Activated naive CD4-positive, alpha-beta T cell treated with anti-CD3 and anti-CD28 coated beads for 36 hours (primary cell): ENCODE measurements at regions of chr22 and their contacts with region 1.

Region 1: GRCh38 chr22:37623075-37624016 is 14.7 kb downstream of the GGA1 start:
- DNase-seq: peak; percentile 86
- H3K4me3 Mint-ChIP-seq: no peak overlapping the region
- H3K27ac Mint-ChIP-seq: peak overlapping the region; percentile 84
- H3K4me1 Mint-ChIP-seq: peaks cover 40% of the 10 kb centered on the region
- H3K27me3 Mint-ChIP-seq: no peaks in the 10 kb centered on the region

Region 2: DNA sequence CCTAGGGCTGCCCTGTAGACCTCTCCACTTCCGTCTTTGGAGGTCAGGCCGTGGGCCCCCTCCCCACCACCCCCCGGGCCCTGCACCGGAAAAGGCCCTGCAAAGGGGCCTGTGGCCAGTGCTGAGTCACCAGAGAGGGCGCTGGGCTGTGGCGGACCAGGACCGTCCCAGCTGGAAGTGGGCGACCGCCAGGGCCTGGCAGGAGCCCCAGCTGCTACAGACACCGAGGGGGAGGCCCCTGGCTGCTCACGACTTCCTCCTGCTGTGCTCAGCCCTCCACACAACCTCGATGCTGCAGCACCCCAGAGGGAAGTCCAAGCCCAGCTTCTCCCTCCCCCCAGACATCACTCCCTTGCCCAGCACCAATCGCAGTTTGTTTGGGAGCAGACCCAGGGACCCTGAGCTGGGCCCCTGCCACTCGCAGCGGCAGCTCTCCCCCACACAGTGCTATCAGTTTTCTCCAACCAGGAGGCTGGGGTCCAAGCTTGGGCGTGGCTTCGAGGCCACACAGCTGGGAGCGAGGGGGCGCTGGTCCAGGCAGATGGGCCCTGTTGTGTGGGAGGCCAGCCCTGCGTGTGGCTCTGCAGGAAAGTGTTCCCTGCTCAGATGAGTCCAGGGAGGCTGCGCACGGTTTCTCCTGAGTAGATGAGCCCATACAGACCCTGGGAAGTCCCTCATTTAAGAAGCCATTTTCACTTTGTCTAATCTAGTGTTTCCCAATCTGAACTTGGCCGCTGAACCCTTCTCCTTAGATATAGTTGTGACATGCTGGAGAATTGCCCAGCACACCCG is 10.5 kb after region 1 on chr22:
- CTCF ChIA-PET with region 1: interaction called, 42 read pairs
- intact Hi-C with region 1: loop called (anchors 1 kb)
- DNase-seq: peak; percentile 79
- H3K4me3 Mint-ChIP-seq: peak overlapping the region; percentile 54
- H3K27ac Mint-ChIP-seq: peak overlapping the region; percentile 83
- H3K4me1 Mint-ChIP-seq: peaks cover 55% of the 10 kb centered on the region
- H3K27me3 Mint-ChIP-seq: no peaks in the 10 kb centered on the region

Region 3: DNA sequence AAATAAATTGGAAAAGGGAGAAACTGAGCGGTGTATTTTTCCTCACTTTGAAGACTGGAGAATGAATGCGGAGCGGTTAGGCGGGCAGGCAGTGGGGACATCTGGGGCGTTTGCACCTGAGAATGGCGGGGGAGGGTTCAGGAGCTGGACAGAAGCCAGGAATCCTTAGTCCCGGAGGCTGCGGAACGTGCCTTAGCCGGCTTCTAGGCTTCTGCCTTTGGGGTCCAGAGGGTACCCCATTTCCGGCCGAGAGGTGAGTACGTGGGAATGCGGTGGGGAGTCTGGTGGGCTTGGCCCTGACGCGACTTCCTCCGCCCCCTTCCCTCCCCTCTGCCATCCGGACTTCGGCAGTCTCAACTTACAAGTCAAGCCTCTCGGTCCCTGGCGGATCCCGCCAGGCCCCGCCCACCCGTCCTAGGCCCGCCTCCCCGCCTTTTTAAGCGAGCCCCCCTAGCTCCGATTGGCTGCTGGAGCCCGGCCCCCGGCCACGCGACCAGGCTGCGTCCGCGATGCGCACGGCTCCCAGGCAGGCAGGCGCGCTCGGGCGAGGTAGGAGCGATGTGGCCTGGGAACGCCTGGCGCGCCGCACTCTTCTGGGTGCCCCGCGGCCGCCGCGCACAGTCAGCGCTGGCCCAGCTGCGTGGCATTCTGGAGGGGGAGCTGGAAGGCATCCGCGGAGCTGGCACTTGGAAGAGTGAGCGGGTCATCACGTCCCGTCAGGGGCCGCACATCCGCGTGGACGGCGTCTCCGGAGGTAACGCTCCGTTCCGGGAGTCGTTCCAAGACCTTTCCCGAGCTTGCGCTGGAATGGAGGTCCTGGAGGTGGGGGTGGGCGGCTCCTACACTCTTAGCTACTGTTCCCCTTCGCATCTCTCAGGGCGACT is 184.3 kb after region 1 on chr22 and contains the start of gene GCAT:
- CTCF ChIA-PET with region 1: no interaction called
- intact Hi-C with region 1: loop called (anchors 5 kb)
- DNase-seq: peak; percentile 96
- H3K4me3 Mint-ChIP-seq: peak within 1 kb of the TSS; percentile 80
- H3K27ac Mint-ChIP-seq: peak within 1 kb of the TSS; percentile 61
- H3K4me1 Mint-ChIP-seq: peaks cover 45% of the 10 kb centered on the region
- H3K27me3 Mint-ChIP-seq: peaks cover 48% of the 10 kb centered on the region
- total RNA-seq, gene GCAT: 26.9 to 27.2 TPM